GM18951 (cell line): ENCODE measurements at regions of chr5 and their contacts with region 1.

Region 1: GRCh38 chr5:132007399-132008165 is 3.9 kb downstream of the ACSL6 start:
- POLR2A ChIP-seq: no peak

Region 2: DNA sequence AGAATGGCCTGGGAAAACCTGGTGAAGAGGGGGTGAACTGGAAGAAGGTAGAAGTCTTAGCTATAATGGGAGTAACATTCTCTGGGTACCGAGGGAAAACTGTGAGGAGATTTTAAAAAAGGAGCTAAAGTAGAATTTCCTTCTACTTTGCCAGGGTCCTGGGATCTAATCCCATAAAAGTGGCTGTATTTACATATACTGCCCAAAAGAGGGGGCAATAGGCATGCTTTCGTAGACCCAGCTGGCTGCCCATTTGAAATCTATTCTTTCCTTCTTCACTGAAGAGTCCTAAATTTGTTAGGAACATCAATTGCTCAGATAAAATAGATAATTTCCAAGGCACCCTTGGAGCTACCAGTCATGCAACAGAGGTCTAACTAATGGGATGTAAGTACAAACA is 584.5 kb before region 1 on chr5:
- in situ Hi-C with region 1: loop called (anchors 10 kb)
- POLR2A ChIP-seq: no peak

Region 3: GRCh38 chr5:131589510-131590348 is 417.9 kb before region 1 on chr5:
- in situ Hi-C with region 1: loop called (anchors 5 kb)
- POLR2A ChIP-seq: no peak

Region 4: GRCh38 chr5:131745703-131746102 is 261.9 kb before region 1 on chr5:
- in situ Hi-C with region 1: no loop called
- POLR2A ChIP-seq: no peak

Region 5: DNA sequence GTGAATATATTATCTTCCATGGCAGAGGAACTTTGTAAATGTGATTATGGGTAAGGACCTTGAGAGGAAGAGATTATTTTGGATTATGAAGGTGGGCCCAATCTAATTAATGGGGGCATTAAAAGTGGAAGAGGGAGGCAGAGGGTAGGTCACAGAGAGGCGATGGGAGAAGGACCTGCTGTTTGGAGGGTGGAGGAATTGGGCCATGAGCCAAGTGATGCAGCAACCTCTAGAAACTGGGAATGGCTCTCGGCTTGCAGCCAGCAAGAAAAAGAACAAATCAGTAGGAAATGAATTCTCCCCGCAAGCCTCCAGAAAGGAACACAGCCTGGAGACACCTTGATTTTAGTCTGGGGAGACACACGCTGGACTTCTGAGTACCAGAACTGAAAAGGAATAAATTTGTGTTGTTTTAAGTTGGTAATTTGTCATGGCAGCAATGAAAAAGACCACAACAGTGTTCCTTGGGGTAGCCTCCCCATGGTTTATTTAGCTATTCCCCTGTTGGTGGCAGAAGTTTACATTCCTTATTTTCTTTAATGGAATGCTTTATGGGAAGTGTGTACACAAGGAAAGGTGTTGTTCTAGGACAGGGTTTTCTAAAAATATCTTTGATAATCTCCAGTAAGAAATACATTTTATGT is 1147.9 kb after region 1 on chr5:
- in situ Hi-C with region 1: no loop called
- POLR2A ChIP-seq: no peak